MCF 10A (cell line): ENCODE measurements at regions of chr10 and their contacts with region 1.

Region 1: GRCh38 chr10:79195091-79195923 is 126.5 kb downstream of the ZMIZ1 start:
- DNase-seq: peak; percentile 87
- H3K4me3 Mint-ChIP-seq: no peak overlapping the region
- H3K27ac Mint-ChIP-seq: no peak overlapping the region
- H3K4me1 Mint-ChIP-seq: peaks cover 27% of the 10 kb centered on the region
- H3K27me3 Mint-ChIP-seq: no peaks in the 10 kb centered on the region
- CTCF ChIP-seq: peak; percentile 96

Region 2: GRCh38 chr10:78302989-78303854 is 892.1 kb before region 1 on chr10:
- CTCF ChIA-PET with region 1: interaction called, 5 read pairs
- POLR2A ChIA-PET with region 1: no interaction called
- intact Hi-C with region 1: loop called (anchors 5 kb)
- DNase-seq: peak; percentile 91
- H3K4me3 Mint-ChIP-seq: peak overlapping the region; percentile 90
- H3K27ac Mint-ChIP-seq: peak overlapping the region; percentile 75
- H3K4me1 Mint-ChIP-seq: no peaks in the 10 kb centered on the region
- H3K27me3 Mint-ChIP-seq: peaks cover 33% of the 10 kb centered on the region
- CTCF ChIP-seq: peak; percentile 43

Region 3: DNA sequence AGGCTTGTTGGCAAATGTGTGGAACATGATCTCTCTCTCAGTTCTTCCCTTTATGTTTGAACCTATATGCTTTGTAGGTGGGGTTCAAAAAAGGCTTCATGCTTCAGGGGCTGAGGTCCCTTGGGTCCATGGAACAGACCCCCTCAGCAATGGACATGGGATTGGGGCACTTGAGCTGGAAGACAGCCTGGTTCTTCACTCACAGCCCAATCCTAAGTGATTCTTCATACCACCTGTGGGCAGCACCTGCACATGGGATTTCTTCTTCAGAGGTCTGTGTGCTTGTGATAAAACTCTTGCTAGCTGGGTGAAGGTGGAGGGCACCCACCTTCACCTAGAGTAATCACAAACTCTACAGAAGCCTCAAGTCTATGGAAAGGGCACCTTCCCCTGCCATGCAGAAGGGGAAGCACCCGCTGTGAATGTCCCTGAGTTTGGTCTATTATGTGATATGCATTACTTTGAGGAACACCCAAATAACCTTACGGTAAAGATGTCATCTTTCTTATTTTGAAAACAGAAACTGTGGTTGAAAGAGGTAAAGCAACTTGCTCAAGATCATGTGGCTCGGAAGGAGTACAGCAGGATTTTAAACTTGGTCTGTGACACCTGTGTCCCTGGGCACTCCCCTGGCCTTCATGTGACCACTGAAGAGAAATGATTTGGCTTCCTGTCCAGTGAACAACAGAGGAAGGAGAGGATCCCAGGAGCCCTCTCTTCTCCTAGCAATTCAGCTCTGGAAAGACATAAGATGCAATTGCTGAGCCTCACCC is 596.0 kb before region 1 on chr10:
- CTCF ChIA-PET with region 1: interaction called, 5 read pairs
- POLR2A ChIA-PET with region 1: no interaction called
- intact Hi-C with region 1: loop called (anchors 2 kb)
- DNase-seq: no peak
- H3K4me3 Mint-ChIP-seq: no peak overlapping the region
- H3K27ac Mint-ChIP-seq: no peak overlapping the region
- H3K4me1 Mint-ChIP-seq: no peaks in the 10 kb centered on the region
- H3K27me3 Mint-ChIP-seq: no peaks in the 10 kb centered on the region
- CTCF ChIP-seq: no peak

Region 4: DNA sequence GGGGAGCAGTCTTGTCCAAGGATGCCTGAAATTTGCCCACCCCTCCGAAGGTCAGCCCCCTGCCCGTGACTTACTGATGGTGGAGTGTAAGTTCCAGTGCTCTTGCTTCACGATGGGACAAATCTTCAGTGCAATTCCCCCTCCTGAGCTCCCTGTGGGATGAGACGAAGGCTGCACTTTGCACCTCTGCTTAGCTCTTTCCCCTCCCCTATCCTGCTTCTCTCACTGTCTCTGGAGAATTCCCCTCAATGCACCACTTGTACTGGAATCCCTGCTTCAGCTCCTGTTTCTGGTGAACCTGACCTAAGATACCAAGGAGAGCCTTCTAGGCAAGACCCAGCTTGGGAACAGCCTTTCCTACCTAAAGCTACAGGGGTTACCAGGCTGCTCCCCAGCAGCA is 249.5 kb before region 1 on chr10:
- CTCF ChIA-PET with region 1: interaction called, 4 read pairs
- POLR2A ChIA-PET with region 1: interaction called, 4 read pairs
- intact Hi-C with region 1: loop called (anchors 1 kb)
- DNase-seq: no peak
- H3K4me3 Mint-ChIP-seq: no peak overlapping the region
- H3K27ac Mint-ChIP-seq: no peak overlapping the region
- H3K4me1 Mint-ChIP-seq: peaks cover 57% of the 10 kb centered on the region
- H3K27me3 Mint-ChIP-seq: no peaks in the 10 kb centered on the region
- CTCF ChIP-seq: no peak

Region 5: DNA sequence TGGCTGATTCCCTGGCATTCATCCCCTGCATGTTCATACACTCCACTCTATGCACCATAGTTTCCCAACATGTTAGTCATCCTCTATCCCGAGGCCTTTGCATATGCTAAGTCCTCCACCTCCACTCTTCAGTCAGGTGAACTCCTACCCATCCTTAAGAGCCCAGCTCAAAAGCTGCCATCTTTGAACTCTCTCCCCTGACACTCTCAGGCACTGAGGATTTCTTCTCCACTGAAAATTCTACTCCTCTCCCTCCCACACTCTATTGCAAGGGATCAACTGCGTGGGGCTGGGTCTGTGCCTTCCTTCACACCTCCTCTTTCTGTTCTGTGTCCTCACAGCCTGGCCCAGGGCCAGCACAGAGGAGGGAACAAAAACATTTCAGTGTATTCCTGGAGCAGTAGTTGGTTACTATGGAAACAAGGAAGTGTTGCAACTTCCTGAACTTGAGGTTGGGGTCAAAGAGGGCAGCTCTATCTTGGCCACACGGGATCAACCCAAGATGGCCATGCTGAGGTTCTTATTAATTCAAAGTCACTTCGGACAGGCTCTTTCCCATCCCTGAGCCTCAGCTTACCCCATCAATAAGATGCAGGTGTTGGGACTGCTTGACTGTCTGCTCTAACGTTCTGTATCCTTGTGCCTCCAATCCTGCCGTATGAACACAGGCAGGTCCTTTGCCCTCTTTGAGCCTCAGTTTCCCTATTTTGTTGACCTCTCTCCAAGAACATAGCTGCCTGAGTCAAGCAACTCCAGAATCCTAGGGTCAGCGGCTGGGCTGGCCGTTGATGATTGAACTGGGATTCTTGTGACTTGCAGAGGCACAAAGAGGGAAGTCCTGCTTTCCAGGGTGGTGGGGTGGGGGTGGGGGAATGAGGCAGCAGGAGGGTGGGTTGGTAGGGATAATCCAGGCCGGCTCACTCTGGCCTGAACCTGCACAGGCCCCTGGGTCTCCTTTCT is 111.0 kb before region 1 on chr10:
- CTCF ChIA-PET with region 1: interaction called, 18 read pairs
- POLR2A ChIA-PET with region 1: interaction called, 4 read pairs
- intact Hi-C with region 1: no loop called
- DNase-seq: peak; percentile 98
- H3K4me3 Mint-ChIP-seq: peak overlapping the region; percentile 38
- H3K27ac Mint-ChIP-seq: peak overlapping the region; percentile 97
- H3K4me1 Mint-ChIP-seq: peaks cover 55% of the 10 kb centered on the region
- H3K27me3 Mint-ChIP-seq: no peaks in the 10 kb centered on the region
- CTCF ChIP-seq: no peak

Region 6: GRCh38 chr10:79158004-79158340 is 37.3 kb before region 1 on chr10:
- CTCF ChIA-PET with region 1: interaction called, 10 read pairs
- POLR2A ChIA-PET with region 1: no interaction called
- intact Hi-C with region 1: no loop called
- DNase-seq: no peak
- H3K4me3 Mint-ChIP-seq: no peak overlapping the region
- H3K27ac Mint-ChIP-seq: peak overlapping the region; percentile 53
- H3K4me1 Mint-ChIP-seq: peaks cover 38% of the 10 kb centered on the region
- H3K27me3 Mint-ChIP-seq: no peaks in the 10 kb centered on the region
- CTCF ChIP-seq: no peak

Region 7: GRCh38 chr10:79184145-79184625 is 11.1 kb before region 1 on chr10:
- CTCF ChIA-PET with region 1: interaction called, 13 read pairs
- POLR2A ChIA-PET with region 1: interaction called, 6 read pairs
- intact Hi-C with region 1: no loop called
- DNase-seq: peak; percentile 89
- H3K4me3 Mint-ChIP-seq: no peak overlapping the region
- H3K27ac Mint-ChIP-seq: no peak overlapping the region
- H3K4me1 Mint-ChIP-seq: peaks cover 26% of the 10 kb centered on the region
- H3K27me3 Mint-ChIP-seq: no peaks in the 10 kb centered on the region
- CTCF ChIP-seq: no peak

Region 8: DNA sequence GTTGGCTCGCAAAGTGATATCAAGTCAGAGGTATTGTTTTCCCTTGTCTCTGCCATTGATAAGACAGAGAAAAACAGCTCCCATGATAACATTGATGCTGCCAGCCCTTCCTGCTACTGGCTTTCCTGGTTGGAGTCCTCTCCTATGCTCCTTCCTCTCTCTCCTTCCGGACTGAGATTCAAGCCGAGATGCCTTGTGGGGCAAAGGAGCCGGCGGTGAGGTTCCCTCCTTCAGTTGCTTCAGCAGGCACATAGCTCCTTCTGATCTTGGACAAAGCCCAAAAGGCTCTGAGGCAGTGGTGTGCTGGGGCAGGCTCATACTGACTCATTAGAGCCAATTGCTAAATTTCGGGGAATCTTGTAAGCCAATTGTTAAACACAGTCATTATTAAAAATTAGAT is 259.0 kb after region 1 on chr10:
- CTCF ChIA-PET with region 1: no interaction called
- POLR2A ChIA-PET with region 1: no interaction called
- intact Hi-C with region 1: no loop called
- DNase-seq: peak; percentile 96
- H3K4me3 Mint-ChIP-seq: no peak overlapping the region
- H3K27ac Mint-ChIP-seq: no peak overlapping the region
- H3K4me1 Mint-ChIP-seq: peaks cover 11% of the 10 kb centered on the region
- H3K27me3 Mint-ChIP-seq: no peaks in the 10 kb centered on the region
- CTCF ChIP-seq: no peak